Cardiac septum (tissue), 1 donor: ENCODE measurements at regions of chr17 and their contacts with region 1.

Region 1: DNA sequence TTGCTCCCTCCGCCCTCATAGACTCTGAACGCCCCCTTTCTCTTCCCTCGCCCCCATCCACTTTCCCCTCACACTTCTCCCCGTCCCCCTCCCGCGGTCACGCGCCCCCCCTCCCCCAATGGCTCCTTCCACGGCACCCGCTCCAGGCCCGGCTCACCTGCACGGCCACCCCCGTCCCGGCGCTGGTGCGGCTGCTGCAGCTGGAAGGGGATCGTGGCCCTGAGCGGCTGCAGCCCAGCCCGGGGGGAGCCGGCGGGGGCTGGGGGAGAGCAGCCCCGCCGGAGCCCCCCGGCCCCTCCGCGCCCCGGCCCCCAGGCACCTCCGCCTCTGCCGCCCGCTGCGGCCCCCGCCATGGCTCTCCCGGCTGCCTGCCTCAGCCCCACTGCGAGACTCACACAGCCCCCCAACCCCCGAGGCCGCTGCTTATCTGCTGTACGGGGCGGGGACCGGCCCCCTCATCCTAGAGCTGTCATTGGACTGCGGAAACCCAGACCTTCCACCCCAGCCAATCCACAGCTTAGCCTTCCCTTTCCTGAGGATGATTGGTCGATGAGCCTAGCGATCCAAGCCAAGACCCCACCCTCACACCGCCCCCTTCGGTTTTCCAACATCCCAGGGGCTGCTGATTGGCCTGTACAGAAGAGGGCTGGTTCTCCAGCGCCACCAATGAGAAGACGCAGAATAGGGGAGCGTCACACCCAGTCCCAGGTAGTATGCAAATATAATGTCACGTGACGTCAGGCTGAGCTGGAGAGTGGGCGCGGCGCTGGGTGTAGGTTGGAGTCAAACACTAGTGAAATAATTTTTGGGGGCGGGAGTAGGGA is at the start of gene FAM117A:
- DNase-seq: peak; percentile 97
- total RNA-seq, gene FAM117A: 5.8 TPM

Region 2: DNA sequence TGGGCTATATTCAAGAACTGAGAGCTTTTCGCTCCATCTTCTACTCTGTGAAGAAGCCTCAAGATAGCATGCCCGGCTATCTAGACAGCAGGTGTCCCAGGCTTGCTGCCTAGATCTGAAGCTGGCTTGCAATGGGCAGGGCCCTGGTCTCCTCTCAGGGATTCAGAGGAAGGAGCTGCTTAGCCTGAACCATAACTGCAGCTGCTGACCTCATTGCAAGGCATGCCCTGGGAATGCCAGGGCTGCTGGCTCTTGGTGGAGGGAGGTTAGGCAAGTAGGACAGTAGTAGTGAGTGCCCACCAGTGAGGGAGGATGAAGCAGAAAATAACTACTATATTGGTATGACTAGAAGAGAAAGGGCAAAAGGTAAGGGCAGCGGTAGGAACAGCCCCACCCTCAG is 34.9 kb before region 1 on chr17:
- intact Hi-C with region 1: loop called (anchors 5 kb)
- DNase-seq: no peak